IMR-90 (cell line): ENCODE measurements at regions of chr17 and their contacts with region 1.

Region 1: GRCh38 chr17:79991140-79991923 is 44.3 kb downstream of the TBC1D16 start:
- DNase-seq: peak; percentile 74
- ATAC-seq: peak; percentile 73
- H3K4me3 ChIP-seq: peak overlapping the region; percentile 9; the same call in 1 of the 2 replicates
- H3K27ac ChIP-seq: no peak overlapping the region
- H3K4me1 ChIP-seq: peaks cover 41% of the 10 kb centered on the region
- H3K27me3 ChIP-seq: no peaks in the 10 kb centered on the region
- CTCF ChIP-seq: peak; percentile 71
- POLR2A ChIP-seq: no peak
- RAD21 ChIP-seq: peak; percentile 77

Region 2: GRCh38 chr17:79749156-79749815 is 242.0 kb before region 1 on chr17:
- CTCF ChIA-PET with region 1: no interaction called
- POLR2A ChIA-PET with region 1: no interaction called
- dilution Hi-C with region 1: no loop called
- in situ Hi-C with region 1: loop called (anchors 5 kb)
- intact Hi-C with region 1: loop called (anchors 2 kb)
- DNase-seq: peak; percentile 73
- ATAC-seq: peak; percentile 55
- H3K4me3 ChIP-seq: no peak overlapping the region
- H3K27ac ChIP-seq: no peak overlapping the region
- H3K4me1 ChIP-seq: peaks cover 3% of the 10 kb centered on the region; the same call in 1 of the 2 replicates
- H3K27me3 ChIP-seq: peaks cover 49% of the 10 kb centered on the region
- CTCF ChIP-seq: no peak
- POLR2A ChIP-seq: no peak
- RAD21 ChIP-seq: no peak

Region 3: DNA sequence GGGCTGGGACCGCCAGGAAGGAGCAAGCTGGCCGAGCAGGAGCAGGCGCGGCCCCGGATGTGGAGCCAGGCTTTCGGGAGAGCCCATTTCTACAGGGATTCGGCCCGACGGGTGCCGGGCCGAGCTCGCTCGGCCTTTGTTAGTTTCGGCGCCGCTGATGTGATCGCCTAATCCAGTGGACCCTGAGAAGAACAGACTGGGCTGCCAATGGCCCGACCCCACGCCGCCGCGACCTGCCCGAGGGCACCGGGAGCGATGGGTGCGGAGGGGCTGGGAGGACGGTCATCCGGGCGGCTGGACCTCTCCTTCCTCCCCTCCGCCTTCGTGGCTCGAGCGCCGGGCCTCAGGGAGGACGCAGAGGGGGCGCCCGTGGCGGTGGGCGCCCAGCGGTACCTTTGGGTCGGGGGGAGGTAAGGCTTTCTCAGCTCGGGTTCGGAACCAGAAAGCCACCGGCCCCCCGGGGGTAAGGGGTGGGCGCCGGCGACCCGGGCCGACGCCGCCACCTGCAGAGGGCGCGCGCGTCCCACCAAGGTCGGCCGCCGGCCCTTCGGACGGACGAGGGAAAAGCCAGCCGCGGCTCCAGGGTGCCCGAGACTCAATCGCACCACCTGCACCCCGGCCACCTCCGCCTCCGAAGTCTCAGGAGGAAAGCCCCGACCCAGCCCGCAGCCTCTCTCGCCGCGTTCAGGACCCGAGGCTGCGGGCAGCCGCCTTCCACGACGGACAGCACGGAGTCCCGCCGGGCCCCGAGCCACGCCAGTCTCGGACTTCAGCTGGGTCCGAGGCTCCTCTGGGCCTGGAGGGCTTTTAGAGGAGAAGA is 201.6 kb before region 1 on chr17:
- CTCF ChIA-PET with region 1: no interaction called
- POLR2A ChIA-PET with region 1: no interaction called
- dilution Hi-C with region 1: no loop called
- in situ Hi-C with region 1: loop called (anchors 5 kb)
- intact Hi-C with region 1: loop called (anchors 1 kb)
- DNase-seq: no peak
- ATAC-seq: peak; percentile 37
- H3K4me3 ChIP-seq: no peak overlapping the region; the same call in 1 of the 2 replicates
- H3K27ac ChIP-seq: no peak overlapping the region
- H3K4me1 ChIP-seq: peaks cover 7% of the 10 kb centered on the region
- H3K27me3 ChIP-seq: peaks cover 37% of the 10 kb centered on the region
- CTCF ChIP-seq: peak; percentile 81
- POLR2A ChIP-seq: no peak
- RAD21 ChIP-seq: peak; percentile 84